Activated CD4-positive, alpha-beta T cell treated with anti-CD3 and anti-CD28 coated beads, Interleukin-2, amount 10 ng/mL, durations not matched to agents 24 days and 14 days (primary cell): ENCODE measurements at regions of chr12 and their contacts with region 1.

Region 1: GRCh38 chr12:119902084-119902509 is 25.0 kb upstream of the CIT start:
- DNase-seq: peak; percentile 92
- H3K4me3 Mint-ChIP-seq: no peak overlapping the region
- H3K27ac Mint-ChIP-seq: no peak overlapping the region
- H3K4me1 Mint-ChIP-seq: peaks cover 8% of the 10 kb centered on the region
- H3K27me3 Mint-ChIP-seq: peaks cover 6% of the 10 kb centered on the region

Region 2: DNA sequence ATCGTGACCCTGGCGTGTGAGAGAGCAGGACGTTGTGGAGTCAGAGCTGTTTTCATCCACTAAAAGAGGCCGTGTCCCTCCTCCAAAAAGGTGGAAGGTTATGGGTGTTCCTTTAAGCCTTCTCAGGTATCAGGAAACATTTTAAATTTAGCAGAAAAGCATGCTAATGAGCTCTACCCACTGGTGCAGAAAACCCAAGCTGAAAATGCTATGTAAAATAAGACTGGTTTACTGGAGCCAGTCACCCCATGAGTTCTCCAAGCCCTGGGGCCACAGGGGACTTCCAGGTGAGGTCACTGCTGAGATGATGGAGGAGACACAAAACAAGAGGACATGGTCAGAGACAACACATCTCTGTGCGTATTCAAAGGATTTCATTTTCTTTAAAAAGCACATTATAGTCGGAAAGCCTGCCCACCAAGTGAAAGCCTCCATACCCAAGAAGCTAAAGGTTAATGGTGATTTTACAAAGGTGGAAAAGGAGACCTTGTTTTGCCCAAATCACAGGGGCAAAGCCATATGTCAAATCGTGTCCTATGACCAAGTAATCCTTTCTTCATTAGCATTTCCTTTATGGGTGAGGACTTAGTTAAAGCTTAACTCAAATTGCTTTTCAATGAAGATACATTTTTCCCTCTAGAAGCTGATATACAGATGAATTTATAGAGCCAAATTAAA is 220.0 kb before region 1 on chr12:
- intact Hi-C with region 1: loop called (anchors 10 kb)
- DNase-seq: peak; percentile 66
- H3K4me3 Mint-ChIP-seq: peak overlapping the region; percentile 22
- H3K27ac Mint-ChIP-seq: peak overlapping the region; percentile 87
- H3K4me1 Mint-ChIP-seq: peaks cover 17% of the 10 kb centered on the region
- H3K27me3 Mint-ChIP-seq: no peaks in the 10 kb centered on the region

Region 3: GRCh38 chr12:119808441-119808840 is 93.7 kb before region 1 on chr12:
- intact Hi-C with region 1: loop called (anchors 2 kb)
- DNase-seq: no peak
- H3K4me3 Mint-ChIP-seq: no peak overlapping the region
- H3K27ac Mint-ChIP-seq: no peak overlapping the region
- H3K4me1 Mint-ChIP-seq: peaks cover 8% of the 10 kb centered on the region
- H3K27me3 Mint-ChIP-seq: no peaks in the 10 kb centered on the region